AG04449 (cell line): ENCODE measurements at regions of chr20 and their contacts with region 1.

Region 1: DNA sequence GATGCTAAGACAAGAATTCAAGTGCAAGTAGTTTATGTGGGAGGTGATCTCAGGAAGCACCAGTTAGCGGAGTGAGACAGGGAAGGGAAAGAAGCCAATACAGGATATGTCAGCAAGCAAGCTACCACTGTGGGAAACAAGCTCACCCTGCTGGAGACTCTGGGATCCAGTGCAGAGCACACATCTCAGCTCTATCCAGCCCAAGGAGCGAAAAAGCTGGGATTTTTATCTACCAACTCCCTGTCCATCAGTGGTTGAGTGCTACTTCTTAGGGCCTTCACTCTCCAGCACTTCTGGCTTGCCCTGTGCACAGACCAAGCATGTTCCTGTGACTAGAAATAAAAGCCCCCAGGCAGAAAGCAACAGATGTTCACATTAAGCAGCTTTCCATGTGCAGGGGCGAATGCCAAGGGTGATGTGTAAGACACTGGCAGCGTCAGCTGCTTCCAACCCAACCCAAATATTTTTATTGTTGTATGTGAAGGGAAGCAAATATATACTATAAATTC is 10.8 kb upstream of the RNF24 start:
- DNase-seq: no peak
- H3K4me3 ChIP-seq: no peak overlapping the region
- CTCF ChIP-seq: peak; percentile 45

Region 2: GRCh38 chr20:3843490-3843889 is 182.7 kb before region 1 on chr20:
- CTCF ChIA-PET with region 1: no interaction called
- POLR2A ChIA-PET with region 1: no interaction called
- DNase-seq: no peak
- H3K4me3 ChIP-seq: no peak overlapping the region
- CTCF ChIP-seq: no peak

Region 3: DNA sequence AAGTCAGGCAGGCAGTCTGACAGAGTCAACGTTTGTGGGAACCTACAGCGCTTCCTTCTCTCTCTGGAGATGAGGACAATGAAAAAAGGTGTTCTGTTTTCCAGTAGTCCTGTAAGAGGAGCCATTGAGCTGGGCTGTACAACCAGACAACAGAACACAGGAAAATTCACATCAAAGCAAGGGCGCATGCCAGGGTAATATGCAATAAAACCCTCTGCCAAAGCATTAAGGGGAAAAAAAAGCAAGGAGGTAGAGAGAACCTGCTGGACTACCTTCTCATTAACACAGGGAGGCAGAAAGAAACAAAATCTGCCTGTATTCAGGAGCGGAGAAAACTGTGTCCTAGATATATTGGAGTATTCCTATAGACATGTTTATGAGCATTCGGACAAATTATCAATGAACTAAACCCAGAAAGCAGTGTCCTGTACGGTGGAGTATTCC is 12.1 kb before region 1 on chr20:
- CTCF ChIA-PET with region 1: interaction called, 15 read pairs
- POLR2A ChIA-PET with region 1: no interaction called
- DNase-seq: peak; percentile 28
- H3K4me3 ChIP-seq: peak overlapping the region; percentile 85
- CTCF ChIP-seq: peak; percentile 67